PC-3 (cell line): ENCODE measurements at regions of chr12 and their contacts with region 1.

Region 1: GRCh38 chr12:19261773-19262172 is 132.2 kb downstream of the PLEKHA5 start:
- DNase-seq: no peak
- ATAC-seq: no peak
- H3K4me3 ChIP-seq: no peak overlapping the region
- H3K27ac ChIP-seq: no peak overlapping the region
- H3K4me1 ChIP-seq: no peaks in the 10 kb centered on the region
- H3K27me3 ChIP-seq: no peaks in the 10 kb centered on the region
- CTCF ChIP-seq: no peak

Region 2: DNA sequence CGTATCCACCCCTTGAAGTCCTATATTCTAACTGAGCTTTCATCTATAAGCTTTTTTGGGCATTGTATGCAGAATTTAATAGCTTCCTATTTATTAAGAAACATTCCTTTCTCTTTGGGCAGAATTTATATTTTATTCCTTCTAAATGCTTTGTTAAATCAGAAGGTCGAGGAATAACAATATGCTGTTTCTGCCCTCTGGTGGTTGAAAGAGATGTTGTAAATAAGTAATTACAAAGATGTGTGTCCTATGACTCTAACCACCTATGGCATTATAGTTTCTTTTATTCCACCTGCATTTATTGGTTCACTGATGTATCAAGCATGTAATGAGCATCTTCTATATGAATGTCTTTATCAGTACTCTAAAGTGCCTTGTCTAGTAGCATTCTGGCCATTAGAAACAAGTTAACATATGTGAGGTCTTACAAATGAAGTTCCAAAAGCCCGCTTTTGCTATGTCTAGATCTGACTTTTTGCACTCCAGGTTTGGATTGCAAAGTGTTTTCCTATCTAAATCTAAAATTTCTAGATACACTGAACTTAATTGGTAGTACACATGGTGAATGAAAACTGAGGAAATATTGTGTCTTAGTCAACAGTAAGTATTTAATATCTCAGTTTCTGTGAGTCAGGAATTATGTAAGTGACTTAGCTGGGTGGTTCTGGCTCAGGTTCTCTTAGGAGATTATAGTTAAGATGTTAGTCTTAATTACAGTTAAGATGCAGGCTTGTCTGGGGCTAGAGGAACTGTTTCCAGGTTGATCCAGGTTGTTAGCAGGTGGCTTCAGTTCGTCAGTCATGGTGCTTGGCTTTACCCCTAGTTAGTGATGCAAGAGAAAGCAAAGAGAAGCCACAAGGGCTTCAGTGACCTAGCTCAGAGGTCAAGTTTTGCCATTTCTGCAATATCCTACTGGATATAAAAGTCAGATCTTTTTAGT is 74.8 kb before region 1 on chr12:
- CTCF ChIA-PET with region 1: no interaction called
- POLR2A ChIA-PET with region 1: no interaction called
- intact Hi-C with region 1: loop called (anchors 2 kb)
- DNase-seq: peak; percentile 68
- ATAC-seq: peak; percentile 35; the same call in 1 of the 2 replicates
- H3K4me3 ChIP-seq: no peak overlapping the region
- H3K27ac ChIP-seq: no peak overlapping the region
- H3K4me1 ChIP-seq: peaks cover 5% of the 10 kb centered on the region
- H3K27me3 ChIP-seq: no peaks in the 10 kb centered on the region
- CTCF ChIP-seq: peak; percentile 74

Region 3: DNA sequence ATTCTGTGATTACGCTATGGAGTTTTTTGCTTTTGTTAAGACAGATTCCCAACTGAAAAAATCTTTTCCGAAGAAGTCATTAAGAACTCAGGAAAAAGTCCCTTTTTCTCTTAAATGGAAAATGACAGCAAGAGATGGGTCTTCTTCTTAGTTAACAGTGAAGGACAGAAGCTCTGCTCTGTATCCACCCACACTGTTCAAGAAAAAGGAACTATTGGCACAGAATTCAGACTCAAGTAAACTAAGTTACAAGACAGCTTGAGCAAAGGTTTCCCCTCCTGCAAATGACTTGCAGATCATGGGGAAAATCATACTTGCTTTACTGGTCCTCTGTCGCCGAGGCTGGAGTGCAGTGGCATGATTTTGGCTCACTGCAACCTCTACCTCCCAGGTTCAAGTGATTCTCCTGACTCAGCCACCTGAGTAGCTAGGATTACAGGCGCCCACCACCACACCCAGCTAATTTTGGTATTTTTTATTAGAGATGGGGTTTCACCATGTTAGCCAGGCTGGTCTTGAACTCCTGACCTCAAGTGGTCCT is 40.4 kb after region 1 on chr12:
- CTCF ChIA-PET with region 1: no interaction called
- POLR2A ChIA-PET with region 1: no interaction called
- intact Hi-C with region 1: no loop called
- DNase-seq: no peak
- ATAC-seq: no peak
- H3K4me3 ChIP-seq: no peak overlapping the region
- H3K27ac ChIP-seq: no peak overlapping the region
- H3K4me1 ChIP-seq: peaks cover 12% of the 10 kb centered on the region
- H3K27me3 ChIP-seq: no peaks in the 10 kb centered on the region
- CTCF ChIP-seq: no peak